Upper lobe of right lung (tissue), 1 donor: ENCODE measurements at regions of chr17 and their contacts with region 1.

Region 1: GRCh38 chr17:68435876-68436842 is 21.1 kb downstream of the WIPI1 start:
- DNase-seq: peak; percentile 69
- ATAC-seq: peak; percentile 91
- H3K4me3 ChIP-seq: no peak overlapping the region
- H3K27ac ChIP-seq: no peak overlapping the region
- H3K4me1 ChIP-seq: peaks cover 28% of the 10 kb centered on the region
- H3K27me3 ChIP-seq: no peaks in the 10 kb centered on the region
- CTCF ChIP-seq: peak; percentile 94

Region 2: GRCh38 chr17:68074279-68074678 is 361.9 kb before region 1 on chr17:
- intact Hi-C with region 1: no loop called
- DNase-seq: no peak
- ATAC-seq: no peak
- H3K4me3 ChIP-seq: no peak overlapping the region
- H3K27ac ChIP-seq: no peak overlapping the region
- H3K4me1 ChIP-seq: no peaks in the 10 kb centered on the region
- H3K27me3 ChIP-seq: no peaks in the 10 kb centered on the region
- CTCF ChIP-seq: no peak

Region 3: GRCh38 chr17:68260051-68260762 is 176.0 kb before region 1 on chr17:
- intact Hi-C with region 1: loop called (anchors 10 kb)
- DNase-seq: no peak
- ATAC-seq: no peak
- H3K4me3 ChIP-seq: no peak overlapping the region
- H3K27ac ChIP-seq: peak overlapping the region; percentile 80
- H3K4me1 ChIP-seq: peaks cover 12% of the 10 kb centered on the region
- H3K27me3 ChIP-seq: no peaks in the 10 kb centered on the region
- CTCF ChIP-seq: no peak